ENCODE measurements at regions of chr10 and their contacts with region 1.

Region 1: GRCh38 chr10:51047857-51048256 is 26.4 kb upstream of the PRKG1 start:
- DNase-seq: no peak
- H3K4me3 ChIP-seq: no peak overlapping the region
- H3K27ac ChIP-seq: no peak overlapping the region
- H3K4me1 ChIP-seq: peaks cover 0 to 12% (median 6%) of the 10 kb centered on the region in 4 donors
- H3K27me3 ChIP-seq: no peaks in the 10 kb centered on the region
- CTCF ChIP-seq: peak in 1 of 3 experiments; percentile 23
- EP300 ChIP-seq: no peak
- POLR2A ChIP-seq: no peak

Region 2: GRCh38 chr10:51010977-51011376 is 36.9 kb before region 1 on chr10:
- intact Hi-C with region 1: loop called (anchors 5 kb)
- DNase-seq: no peak
- H3K4me3 ChIP-seq: no peak overlapping the region
- H3K27ac ChIP-seq: no peak overlapping the region
- H3K4me1 ChIP-seq: peaks cover 0 to 8% (median 3%) of the 10 kb centered on the region in 4 donors
- H3K27me3 ChIP-seq: no peaks in the 10 kb centered on the region
- CTCF ChIP-seq: peak; percentile 65 to 87 (median 69)
- EP300 ChIP-seq: no peak
- POLR2A ChIP-seq: no peak

Measured in esophagus muscularis mucosa (tissue), 4 donors.